ENCODE measurements at regions of chr13 and their contacts with region 1.

Region 1: DNA sequence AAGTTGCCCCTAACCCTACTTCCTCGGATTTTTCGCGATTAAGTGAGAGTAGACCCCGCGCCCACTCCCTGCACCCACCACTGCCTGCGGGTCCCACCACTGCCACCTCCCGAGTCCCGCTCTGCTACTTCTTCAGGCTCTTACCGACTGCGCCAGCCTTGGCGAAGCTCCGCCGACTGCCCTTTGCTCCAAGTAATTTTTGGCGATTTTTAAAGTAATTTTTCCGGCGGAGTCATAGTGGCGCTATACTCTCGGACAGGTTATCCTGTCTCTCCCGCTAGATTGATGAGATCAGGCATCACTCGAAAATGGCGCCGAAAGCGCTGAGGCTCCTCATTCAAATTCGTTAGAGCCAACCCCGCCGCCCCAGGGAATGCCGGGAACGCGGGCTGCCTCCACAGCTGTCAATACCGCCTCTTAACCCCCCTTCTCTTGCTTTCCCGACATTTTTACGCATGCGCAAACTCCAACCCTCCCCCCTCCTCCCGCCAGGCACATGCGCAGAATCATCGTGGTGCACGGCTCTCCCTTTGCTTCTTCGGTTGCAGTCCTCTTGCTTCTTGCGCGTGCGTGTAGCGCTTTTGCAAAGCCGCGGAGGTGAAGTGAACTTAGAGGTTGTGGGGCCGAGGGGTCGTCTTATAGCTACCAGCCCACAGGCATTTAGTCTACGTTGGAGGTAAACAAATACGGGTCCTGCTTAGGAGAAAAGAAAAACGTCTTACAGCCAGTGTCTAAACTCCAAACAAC is 66.6 kb downstream of the KCNRG start:
- DNase-seq: peak; percentile 98 to 99 (median 99)
- H3K4me3 ChIP-seq: peak overlapping the region; percentile 85 to 87
- H3K4me3 Mint-ChIP-seq: peak overlapping the region; percentile 96 to 100 (median 99)
- H3K27ac ChIP-seq: peak overlapping the region; percentile 89
- H3K27ac Mint-ChIP-seq: peak overlapping the region; percentile 93 to 100 (median 98)
- H3K4me1 ChIP-seq: peaks cover 54% of the 10 kb centered on the region
- H3K4me1 Mint-ChIP-seq: peaks cover 23 to 62% (median 37%) of the 10 kb centered on the region in 4 donors
- H3K27me3 ChIP-seq: no peaks in the 10 kb centered on the region
- H3K27me3 Mint-ChIP-seq: peaks cover 0 to 6% of the 10 kb centered on the region in 2 donors

Region 2: GRCh38 chr13:49936085-49936940 is 145.5 kb before region 1 on chr13 and contains the start of gene SPRYD7:
- CTCF ChIA-PET with region 1: interaction called, 4 read pairs
- POLR2A ChIA-PET with region 1: interaction called, 7 read pairs
- intact Hi-C with region 1: loop called (anchors 1 kb)
- DNase-seq: peak; percentile 89 to 92 (median 92)
- H3K4me3 ChIP-seq: peak within 1 kb of the TSS; percentile 66 to 96
- H3K4me3 Mint-ChIP-seq: peak within 1 kb of the TSS; percentile 91 to 97 (median 95)
- H3K27ac ChIP-seq: peak within 1 kb of the TSS; percentile 63
- H3K27ac Mint-ChIP-seq: peak within 1 kb of the TSS; percentile 85 to 97 (median 94)
- H3K4me1 ChIP-seq: peaks cover 19% of the 10 kb centered on the region
- H3K4me1 Mint-ChIP-seq: peaks cover 12 to 23% (median 15%) of the 10 kb centered on the region in 4 donors
- H3K27me3 ChIP-seq: no peaks in the 10 kb centered on the region
- H3K27me3 Mint-ChIP-seq: no peaks in the 10 kb centered on the region
- total RNA-seq, gene SPRYD7: 3.3 to 5.1 TPM

Region 3: DNA sequence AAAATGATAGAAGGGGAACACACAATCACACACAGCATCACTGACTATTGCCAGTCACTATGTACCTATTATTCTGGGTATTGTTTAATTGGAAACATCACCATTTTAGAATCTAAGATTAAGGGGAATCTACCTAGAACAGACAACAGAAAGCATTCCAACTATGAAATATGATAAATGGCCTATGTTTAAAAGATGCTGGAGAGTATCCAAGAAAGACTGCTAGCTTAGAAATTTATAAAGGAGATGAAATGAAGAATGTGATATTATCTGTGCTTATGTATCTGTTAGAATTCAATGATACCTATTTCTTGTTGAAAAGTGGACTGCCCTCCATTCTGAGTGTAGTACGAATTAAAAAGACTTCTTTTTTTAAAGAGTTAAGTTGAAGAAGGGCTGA is 16.1 kb before region 1 on chr13:
- CTCF ChIA-PET with region 1: interaction called, 6 read pairs
- POLR2A ChIA-PET with region 1: interaction called, 22 read pairs
- intact Hi-C with region 1: no loop called
- DNase-seq: no peak
- H3K4me3 ChIP-seq: no peak overlapping the region
- H3K4me3 Mint-ChIP-seq: no peak overlapping the region
- H3K27ac ChIP-seq: no peak overlapping the region
- H3K27ac Mint-ChIP-seq: no peak overlapping the region
- H3K4me1 ChIP-seq: no peaks in the 10 kb centered on the region
- H3K4me1 Mint-ChIP-seq: peaks cover 1 to 26% (median 5%) of the 10 kb centered on the region in 4 donors
- H3K27me3 ChIP-seq: no peaks in the 10 kb centered on the region
- H3K27me3 Mint-ChIP-seq: no peaks in the 10 kb centered on the region

Region 4: GRCh38 chr13:50116430-50116973 is 34.6 kb after region 1 on chr13:
- CTCF ChIA-PET with region 1: interaction called, 252 read pairs
- POLR2A ChIA-PET with region 1: interaction called, 648 read pairs
- intact Hi-C with region 1: no loop called
- DNase-seq: no peak
- H3K4me3 ChIP-seq: no peak overlapping the region
- H3K4me3 Mint-ChIP-seq: peak overlapping the region in 1 of 8 donors; percentile 2
- H3K27ac ChIP-seq: no peak overlapping the region
- H3K27ac Mint-ChIP-seq: peak overlapping the region in 1 of 7 donors; percentile 5
- H3K4me1 ChIP-seq: peaks cover 41% of the 10 kb centered on the region
- H3K4me1 Mint-ChIP-seq: peaks cover 17 to 24% (median 20%) of the 10 kb centered on the region in 4 donors
- H3K27me3 ChIP-seq: no peaks in the 10 kb centered on the region
- H3K27me3 Mint-ChIP-seq: no peaks in the 10 kb centered on the region

Region 5: GRCh38 chr13:50268500-50268899 is 186.6 kb after region 1 on chr13:
- CTCF ChIA-PET with region 1: interaction called, 14 read pairs
- POLR2A ChIA-PET with region 1: interaction called, 3 read pairs
- intact Hi-C with region 1: loop called (anchors 1 kb)
- DNase-seq: no peak
- H3K4me3 ChIP-seq: no peak overlapping the region
- H3K4me3 Mint-ChIP-seq: no peak overlapping the region
- H3K27ac ChIP-seq: no peak overlapping the region
- H3K27ac Mint-ChIP-seq: peak overlapping the region in 1 of 7 donors; percentile 42
- H3K4me1 ChIP-seq: no peaks in the 10 kb centered on the region
- H3K4me1 Mint-ChIP-seq: peaks cover 0 to 7% (median 2%) of the 10 kb centered on the region in 4 donors
- H3K27me3 ChIP-seq: no peaks in the 10 kb centered on the region
- H3K27me3 Mint-ChIP-seq: no peaks in the 10 kb centered on the region

Region 6: DNA sequence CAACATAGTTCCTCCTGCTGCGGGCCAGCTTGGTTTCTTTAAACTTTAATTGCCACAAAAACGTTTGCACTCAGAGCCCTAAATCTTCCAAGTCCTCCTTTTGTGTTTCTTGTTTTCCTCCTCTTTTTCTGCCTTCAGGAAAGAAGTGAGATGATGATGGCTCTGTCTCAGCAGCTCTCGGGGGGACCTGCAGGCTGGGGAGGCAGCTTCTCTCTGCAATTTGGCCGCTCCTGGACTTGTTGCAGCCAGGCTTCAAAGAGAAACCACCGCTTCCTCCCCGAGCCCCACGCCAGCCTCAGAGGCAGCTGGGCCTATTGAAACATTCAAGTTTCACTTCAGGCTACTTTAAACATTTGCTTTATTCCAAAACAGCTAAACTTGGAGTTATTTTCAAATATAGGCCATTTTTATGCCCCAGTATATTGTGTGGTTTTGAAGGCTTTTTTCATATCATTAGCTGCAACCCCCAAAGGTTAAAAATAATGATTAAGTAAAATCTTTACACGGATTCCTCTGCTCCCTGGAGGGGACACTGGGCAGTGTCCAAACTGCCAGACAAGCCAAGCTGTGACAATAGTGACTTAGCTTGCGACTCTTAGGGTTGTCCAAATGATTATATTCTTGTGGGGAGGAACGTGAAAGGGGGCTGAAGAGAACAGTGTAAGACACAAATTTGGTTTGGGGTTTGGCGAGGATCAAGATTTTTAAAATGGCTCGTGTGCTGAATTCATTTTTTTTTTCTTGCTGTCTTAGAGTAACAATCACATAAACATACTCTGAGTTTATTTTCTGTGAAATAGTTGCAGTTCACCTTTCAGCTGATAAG is 430.8 kb after region 1 on chr13:
- CTCF ChIA-PET with region 1: interaction called, 6 read pairs
- POLR2A ChIA-PET with region 1: interaction called, 3 read pairs
- intact Hi-C with region 1: loop called (anchors 5 kb)
- DNase-seq: peak; percentile 36 to 49 (median 47)
- H3K4me3 ChIP-seq: peak overlapping the region; percentile 14 to 37
- H3K4me3 Mint-ChIP-seq: no peak overlapping the region
- H3K27ac ChIP-seq: peak overlapping the region; percentile 12
- H3K27ac Mint-ChIP-seq: no peak overlapping the region
- H3K4me1 ChIP-seq: peaks cover 20% of the 10 kb centered on the region
- H3K4me1 Mint-ChIP-seq: no peaks in the 10 kb centered on the region
- H3K27me3 ChIP-seq: no peaks in the 10 kb centered on the region
- H3K27me3 Mint-ChIP-seq: no peaks in the 10 kb centered on the region

Region 7: DNA sequence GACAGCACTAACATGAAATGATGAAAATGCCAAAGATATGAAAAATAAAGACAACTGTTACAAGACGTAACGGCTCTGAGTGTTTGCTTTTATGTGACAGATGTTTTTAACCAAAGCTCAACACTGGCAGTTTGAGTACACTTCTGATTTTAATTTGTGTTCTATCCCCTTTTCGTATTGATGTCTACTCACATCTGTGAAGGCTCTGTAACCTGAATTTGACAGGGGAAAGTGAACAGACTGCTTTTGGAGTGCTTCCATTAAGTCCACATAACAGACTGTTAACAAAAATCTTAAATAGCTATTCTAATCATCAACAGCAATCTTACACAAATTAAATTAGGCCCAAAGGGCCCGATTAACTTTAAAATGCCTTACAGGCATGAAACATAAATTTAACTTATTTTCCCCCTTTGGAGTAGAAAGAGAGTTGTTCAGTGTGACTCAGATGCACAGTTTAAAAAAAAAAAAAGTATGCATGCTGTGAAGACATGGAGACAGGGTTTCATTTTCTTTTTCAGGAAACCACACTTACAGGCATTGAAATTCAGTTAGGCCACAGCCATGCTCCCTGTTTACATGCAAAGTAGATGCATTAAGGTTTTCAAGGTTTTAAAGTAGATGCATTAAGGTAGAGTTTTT is 811.5 kb after region 1 on chr13:
- CTCF ChIA-PET with region 1: interaction called, 3 read pairs
- POLR2A ChIA-PET with region 1: interaction called, 5 read pairs
- intact Hi-C with region 1: loop called (anchors 1 kb)
- DNase-seq: peak; percentile 43 to 71 (median 59)
- H3K4me3 ChIP-seq: peak overlapping the region; percentile 42 to 50
- H3K4me3 Mint-ChIP-seq: peak overlapping the region; percentile 69 to 85 (median 82)
- H3K27ac ChIP-seq: peak overlapping the region; percentile 69
- H3K27ac Mint-ChIP-seq: peak overlapping the region; percentile 78 to 97 (median 95)
- H3K4me1 ChIP-seq: peaks cover 45% of the 10 kb centered on the region
- H3K4me1 Mint-ChIP-seq: peaks cover 35 to 46% (median 39%) of the 10 kb centered on the region in 4 donors
- H3K27me3 ChIP-seq: no peaks in the 10 kb centered on the region
- H3K27me3 Mint-ChIP-seq: peaks cover 0 to 2% of the 10 kb centered on the region in 2 donors

Measured in CD4-positive, alpha-beta memory T cell (primary cell).